ENCODE measurements at regions of chr1 and their contacts with region 1.

Region 1: DNA sequence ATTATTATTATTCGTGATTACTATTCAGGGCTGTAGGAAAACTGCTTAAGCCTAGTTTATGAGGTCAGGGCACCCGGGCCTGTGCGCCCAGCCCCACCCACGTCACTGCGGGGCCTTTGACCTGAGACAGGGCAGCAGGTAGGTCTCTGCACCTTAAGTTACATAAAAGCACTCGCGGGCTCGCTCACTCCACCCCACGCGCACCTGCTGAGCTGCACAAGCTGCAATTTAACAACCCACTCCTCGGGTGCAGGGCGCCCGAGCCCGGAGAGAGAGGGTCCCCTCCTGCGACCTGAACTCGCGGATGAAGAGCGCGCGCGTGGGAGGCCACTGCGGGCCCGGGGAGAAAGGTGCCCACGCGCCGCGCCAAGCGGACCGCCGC is 477 bp downstream of the ICMT start:
- DNase-seq: peak; percentile 22
- H3K4me3 Mint-ChIP-seq: peak overlapping the region; percentile 87
- H3K27ac Mint-ChIP-seq: peak overlapping the region; percentile 26
- H3K4me1 Mint-ChIP-seq: peaks cover 26% of the 10 kb centered on the region
- H3K27me3 Mint-ChIP-seq: peaks cover 10% of the 10 kb centered on the region

Region 2: DNA sequence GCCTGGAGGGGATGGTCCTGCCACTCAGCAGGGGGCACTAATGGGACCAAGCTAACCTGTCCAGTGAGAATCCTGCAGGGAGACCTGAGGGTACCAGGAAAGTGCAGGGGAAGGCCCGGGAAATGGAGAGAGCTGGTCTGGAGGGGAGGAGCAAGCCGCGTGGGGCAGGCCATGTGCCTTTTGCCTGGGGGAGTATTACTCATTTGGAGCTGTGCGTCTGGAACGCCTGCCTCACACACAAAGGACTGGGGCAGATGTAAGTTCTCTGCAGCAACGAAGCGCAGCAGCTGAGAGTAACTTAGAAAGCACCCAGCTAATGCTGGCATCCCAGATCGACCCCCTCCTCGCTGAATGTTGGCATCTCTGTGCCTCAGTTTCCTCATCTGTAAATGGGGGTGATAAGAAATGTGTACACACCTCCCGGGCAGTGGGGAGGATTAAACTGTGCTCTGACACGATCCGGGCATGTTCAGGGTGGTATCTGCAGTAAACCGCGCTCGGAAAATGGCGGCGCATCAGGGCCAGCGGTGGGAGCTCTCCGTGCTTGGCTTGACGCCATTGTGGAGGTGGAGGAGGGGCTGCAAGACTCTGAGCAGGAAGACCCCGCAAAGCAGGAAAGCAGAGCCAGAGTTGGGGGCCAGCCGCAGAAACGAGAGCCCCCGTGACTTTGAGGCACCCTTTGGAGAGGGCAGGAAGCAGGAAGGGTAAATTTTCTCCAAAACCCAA is 455.5 kb before region 1 on chr1:
- CTCF ChIA-PET with region 1: no interaction called
- intact Hi-C with region 1: no loop called
- DNase-seq: no peak
- H3K4me3 Mint-ChIP-seq: no peak overlapping the region
- H3K27ac Mint-ChIP-seq: no peak overlapping the region
- H3K4me1 Mint-ChIP-seq: no peaks in the 10 kb centered on the region
- H3K27me3 Mint-ChIP-seq: peaks cover 5% of the 10 kb centered on the region

Region 3: DNA sequence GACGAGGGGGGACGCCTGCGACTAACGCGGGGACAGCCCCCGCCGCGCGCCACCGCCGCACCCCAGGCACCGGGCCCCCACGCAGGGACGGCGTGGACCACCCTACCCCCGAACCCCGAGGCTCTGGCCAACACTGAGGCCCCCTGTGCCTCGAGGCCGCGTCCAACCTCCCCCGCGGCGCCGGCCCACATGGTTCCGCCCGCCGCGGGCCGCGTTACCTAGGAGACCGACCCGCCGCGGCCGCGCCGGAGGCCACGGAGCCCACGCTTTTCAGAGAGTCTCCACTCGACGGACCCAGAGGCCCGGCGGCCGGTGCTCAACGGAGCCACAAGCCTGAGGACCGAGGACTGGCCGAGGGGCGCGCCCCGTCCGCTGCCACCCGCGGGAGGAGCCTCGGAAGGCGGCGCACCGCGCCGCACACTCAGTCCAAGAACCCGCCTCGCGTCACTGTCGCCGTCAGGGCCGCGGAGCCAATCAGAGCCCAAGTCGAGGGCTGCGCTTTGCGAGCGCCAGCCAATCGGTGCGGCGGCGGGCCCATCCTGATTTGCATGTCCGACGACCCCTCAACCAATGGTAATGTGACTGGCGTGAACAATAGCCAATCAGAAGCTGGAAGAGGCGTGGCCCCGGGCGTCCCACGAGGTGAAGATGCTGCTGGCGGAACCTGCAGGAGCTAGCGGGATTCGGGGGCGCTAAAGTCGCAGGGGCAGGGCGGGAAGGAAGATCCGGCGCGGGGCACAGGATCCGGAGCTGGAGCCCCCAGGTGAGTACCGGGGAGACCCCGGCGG is 243.1 kb before region 1 on chr1 and contains the start of gene NPHP4:
- CTCF ChIA-PET with region 1: no interaction called
- intact Hi-C with region 1: loop called (anchors 2 kb)
- DNase-seq: peak; percentile 100
- H3K4me3 Mint-ChIP-seq: peak within 1 kb of the TSS; percentile 81
- H3K27ac Mint-ChIP-seq: peak within 1 kb of the TSS; percentile 79
- H3K4me1 Mint-ChIP-seq: peaks cover 22% of the 10 kb centered on the region
- H3K27me3 Mint-ChIP-seq: no peaks in the 10 kb centered on the region
- total RNA-seq, gene NPHP4: 10.7 to 11.2 TPM

Region 4: DNA sequence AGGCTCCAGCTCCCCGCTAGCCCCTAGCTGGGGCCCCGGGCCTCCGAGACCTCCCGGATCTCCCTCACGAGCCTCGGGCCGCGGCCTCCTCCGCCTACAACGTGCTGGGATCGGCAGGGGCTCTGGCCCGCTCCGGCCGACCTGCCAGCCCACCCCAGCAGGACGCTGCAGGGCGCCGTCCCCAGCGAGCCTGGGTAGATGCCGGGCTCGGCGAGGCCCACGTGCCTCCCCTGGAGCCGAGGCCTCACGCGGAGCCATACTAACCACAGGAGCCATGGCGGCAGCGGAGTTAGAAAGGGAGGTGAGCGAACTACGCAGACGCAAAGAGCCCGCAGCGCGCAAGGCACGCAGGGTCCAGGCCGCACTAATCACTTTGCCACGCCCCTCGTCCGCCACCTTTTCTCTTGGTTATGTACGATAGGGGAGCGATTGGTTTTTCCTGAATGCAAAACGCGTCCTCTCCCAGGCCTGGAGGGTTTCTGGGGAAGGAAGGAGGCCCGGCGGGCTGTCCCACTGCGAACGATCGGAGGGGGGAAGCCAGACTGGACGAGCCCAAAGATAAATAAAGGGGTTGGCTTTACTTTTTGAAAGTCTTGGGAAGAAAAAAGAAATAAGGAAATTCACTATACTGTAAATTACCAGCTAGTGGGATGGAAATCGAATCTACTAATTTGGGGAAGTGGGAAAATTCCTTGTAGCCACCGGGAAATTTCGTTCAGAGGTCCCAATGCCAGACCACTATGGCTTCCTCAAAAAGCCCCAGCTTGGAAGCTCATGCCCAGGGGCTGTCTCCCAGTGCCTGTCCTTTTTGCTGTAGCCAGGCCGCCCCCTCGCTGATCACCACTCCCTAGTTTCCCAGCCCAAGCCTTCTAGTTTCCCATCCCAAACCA is 35.7 kb before region 1 on chr1 and contains the start of gene RPL22:
- CTCF ChIA-PET with region 1: interaction called, 5 read pairs
- intact Hi-C with region 1: loop called (anchors 1 kb)
- DNase-seq: peak; percentile 99
- H3K4me3 Mint-ChIP-seq: peak within 1 kb of the TSS; percentile 91
- H3K27ac Mint-ChIP-seq: peak within 1 kb of the TSS; percentile 95
- H3K4me1 Mint-ChIP-seq: peaks cover 39% of the 10 kb centered on the region
- H3K27me3 Mint-ChIP-seq: no peaks in the 10 kb centered on the region
- total RNA-seq, gene RPL22: 507 to 553 TPM

Region 5: GRCh38 chr1:6205849-6206519 is 29.3 kb before region 1 on chr1 and contains the start of gene RNF207:
- CTCF ChIA-PET with region 1: interaction called, 5 read pairs
- intact Hi-C with region 1: loop called (anchors 1 kb)
- DNase-seq: peak; percentile 66
- H3K4me3 Mint-ChIP-seq: peak within 1 kb of the TSS; percentile 67
- H3K27ac Mint-ChIP-seq: no peak within 1 kb of the TSS
- H3K4me1 Mint-ChIP-seq: peaks cover 12% of the 10 kb centered on the region
- H3K27me3 Mint-ChIP-seq: peaks cover 21% of the 10 kb centered on the region
- total RNA-seq, gene RNF207: 3.2 to 4.1 TPM